Activated CD8-positive, alpha-beta T cell treated with anti-CD3 and anti-CD28 coated beads for 36 hours (primary cell): ENCODE measurements at regions of chr10 and their contacts with region 1.

Region 1: DNA sequence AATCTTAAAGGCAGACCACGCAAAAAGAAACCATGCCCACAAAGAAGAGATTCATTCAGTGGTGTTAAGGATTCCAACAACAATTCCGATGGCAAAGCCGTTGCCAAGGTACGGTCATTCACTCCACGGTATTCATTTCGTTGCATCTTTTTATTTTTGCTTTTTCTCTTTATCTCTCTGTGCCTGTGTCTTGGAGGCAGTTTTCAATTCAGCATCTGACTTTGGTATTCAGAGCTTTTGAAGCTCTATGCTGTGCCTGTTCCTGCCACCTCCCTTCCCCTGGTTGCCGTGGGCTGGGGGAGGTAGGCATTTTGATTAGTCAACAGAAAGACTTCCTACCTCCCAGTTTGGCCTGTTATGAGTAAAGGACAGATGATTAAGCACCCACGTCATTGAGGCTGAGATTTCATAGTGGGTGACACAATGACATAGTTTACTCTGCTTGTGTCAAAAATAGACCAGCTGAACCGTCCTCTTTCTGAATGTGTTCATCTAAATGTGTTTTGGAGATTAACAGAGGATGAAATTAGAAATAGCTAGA is 149.5 kb downstream of the ARID5B start:
- DNase-seq: peak; percentile 88
- ATAC-seq: peak; percentile 57
- H3K4me3 Mint-ChIP-seq: peak overlapping the region; percentile 84
- H3K27ac Mint-ChIP-seq: peak overlapping the region; percentile 95
- H3K4me1 Mint-ChIP-seq: peaks cover 96% of the 10 kb centered on the region
- H3K27me3 Mint-ChIP-seq: no peaks in the 10 kb centered on the region
- CTCF ChIP-seq: no peak

Region 2: DNA sequence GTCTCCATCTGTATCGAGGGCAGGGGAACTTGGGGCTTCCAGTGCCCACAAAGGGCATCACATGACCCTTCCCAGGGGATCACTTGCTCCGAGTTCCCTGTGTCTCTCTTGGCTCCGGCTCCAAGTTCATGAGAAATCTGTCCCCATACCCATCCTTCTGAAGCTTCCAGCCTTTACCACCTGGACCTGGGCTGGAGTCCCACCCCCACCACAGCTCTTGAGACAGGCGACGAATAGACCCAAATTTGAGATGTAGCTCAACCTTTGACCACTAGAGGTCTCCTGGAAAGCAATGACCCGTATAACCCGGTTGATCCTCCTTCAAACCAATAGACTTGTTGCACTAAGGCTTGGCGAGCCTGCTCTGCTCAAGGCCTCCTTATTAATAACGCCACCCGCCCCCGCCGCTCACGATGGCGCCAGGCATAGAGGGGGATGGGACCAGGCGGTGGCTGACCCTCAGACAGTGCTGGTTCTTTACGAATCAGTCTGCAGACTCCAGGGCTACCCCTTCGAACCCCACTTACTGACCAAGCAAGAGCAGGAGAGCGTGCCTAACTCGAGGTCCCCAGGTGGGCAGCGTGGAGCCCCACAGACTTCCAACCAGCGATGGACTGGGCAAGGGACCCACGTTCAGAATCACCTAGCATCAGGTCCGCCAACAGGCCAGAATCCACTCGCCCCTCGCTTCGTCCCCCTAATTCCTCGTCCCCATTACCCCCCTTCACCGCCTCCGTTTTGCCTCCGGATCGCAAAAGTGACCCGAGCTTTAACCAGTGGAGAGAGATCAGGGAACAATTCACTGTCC is 153.9 kb before region 1 on chr10:
- CTCF ChIA-PET with region 1: interaction called, 13 read pairs
- POLR2A ChIA-PET with region 1: interaction called, 79 read pairs
- intact Hi-C with region 1: loop called (anchors 5 kb)
- DNase-seq: peak; percentile 74
- ATAC-seq: peak; percentile 78
- H3K4me3 Mint-ChIP-seq: peak overlapping the region; percentile 55
- H3K27ac Mint-ChIP-seq: peak overlapping the region; percentile 97
- H3K4me1 Mint-ChIP-seq: peaks cover 42% of the 10 kb centered on the region
- H3K27me3 Mint-ChIP-seq: no peaks in the 10 kb centered on the region
- CTCF ChIP-seq: peak; percentile 67

Region 3: GRCh38 chr10:61943674-61944410 is 107.1 kb before region 1 on chr10:
- CTCF ChIA-PET with region 1: interaction called, 6 read pairs
- POLR2A ChIA-PET with region 1: interaction called, 10 read pairs
- intact Hi-C with region 1: loop called (anchors 2 kb)
- DNase-seq: peak; percentile 58
- ATAC-seq: peak; percentile 77
- H3K4me3 Mint-ChIP-seq: peak overlapping the region; percentile 70
- H3K27ac Mint-ChIP-seq: peak overlapping the region; percentile 98
- H3K4me1 Mint-ChIP-seq: peaks cover 64% of the 10 kb centered on the region
- H3K27me3 Mint-ChIP-seq: no peaks in the 10 kb centered on the region
- CTCF ChIP-seq: no peak

Region 4: DNA sequence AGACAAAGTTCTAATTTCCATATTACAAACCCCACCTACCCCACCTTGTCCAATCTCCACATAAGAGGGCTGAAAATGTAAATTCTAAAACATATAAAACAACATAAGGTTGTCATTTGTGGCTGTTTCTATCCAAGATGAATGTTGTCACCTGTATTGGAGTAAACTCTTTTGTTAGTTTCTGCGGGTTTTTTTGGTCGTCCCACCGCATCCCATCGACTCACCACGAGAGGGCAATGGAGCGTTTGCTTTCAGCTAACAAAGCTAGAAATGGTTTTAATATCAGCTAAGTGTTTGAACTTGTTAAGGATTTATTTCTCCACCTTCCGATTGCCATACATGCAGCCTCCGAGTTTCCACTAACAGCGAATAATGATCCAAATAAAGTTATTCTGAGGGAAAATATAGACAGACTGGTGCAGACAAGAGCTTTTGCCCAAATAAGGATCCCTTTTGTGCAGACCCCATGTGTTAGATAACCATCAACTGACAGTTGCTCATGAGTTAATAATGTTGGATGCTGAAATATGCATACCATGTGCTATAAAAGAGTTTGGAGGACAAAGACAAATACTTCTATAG is 12.3 kb before region 1 on chr10:
- CTCF ChIA-PET with region 1: interaction called, 24 read pairs
- POLR2A ChIA-PET with region 1: interaction called, 21 read pairs
- intact Hi-C with region 1: no loop called
- DNase-seq: peak; percentile 87
- ATAC-seq: peak; percentile 75
- H3K4me3 Mint-ChIP-seq: peak overlapping the region; percentile 1
- H3K27ac Mint-ChIP-seq: peak overlapping the region; percentile 82
- H3K4me1 Mint-ChIP-seq: peaks cover 62% of the 10 kb centered on the region
- H3K27me3 Mint-ChIP-seq: no peaks in the 10 kb centered on the region
- CTCF ChIP-seq: peak; percentile 81

Region 5: DNA sequence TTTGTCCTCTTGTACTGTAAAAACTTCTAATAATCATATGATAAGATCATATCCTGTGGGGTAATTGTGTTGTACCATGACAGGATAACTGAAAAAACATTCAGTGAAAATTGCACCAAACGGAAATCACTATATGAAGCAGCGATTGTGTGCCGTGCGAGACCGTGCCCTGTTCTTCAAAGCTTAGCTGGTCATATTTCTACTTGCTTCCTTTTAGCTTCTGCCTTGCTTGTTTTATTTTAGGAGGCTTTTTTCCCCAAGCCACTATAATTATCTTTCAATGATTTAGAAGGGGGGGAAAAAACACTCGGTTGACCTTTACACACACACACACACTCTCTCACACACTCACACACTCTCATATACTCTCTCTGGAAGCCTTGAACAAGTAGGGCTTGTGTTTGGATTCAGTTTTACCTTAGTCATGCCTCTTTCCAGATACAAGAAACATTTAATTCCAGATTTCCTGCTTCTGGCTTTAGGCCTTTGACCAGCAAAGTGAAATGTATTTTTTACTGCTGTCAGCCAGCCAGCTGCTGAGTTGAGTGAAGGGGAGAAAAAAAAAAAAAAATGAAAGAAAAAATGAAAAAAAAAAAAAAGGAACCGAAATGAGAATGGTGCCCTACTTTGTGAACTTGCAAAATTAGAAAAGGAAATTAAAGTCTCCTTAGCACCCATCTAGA is 31.9 kb after region 1 on chr10:
- CTCF ChIA-PET with region 1: interaction called, 7 read pairs
- POLR2A ChIA-PET with region 1: interaction called, 23 read pairs
- intact Hi-C with region 1: loop called (anchors 2 kb)
- DNase-seq: peak; percentile 75
- ATAC-seq: peak; percentile 81
- H3K4me3 Mint-ChIP-seq: peak overlapping the region; percentile 58
- H3K27ac Mint-ChIP-seq: peak overlapping the region; percentile 92
- H3K4me1 Mint-ChIP-seq: peaks cover 64% of the 10 kb centered on the region
- H3K27me3 Mint-ChIP-seq: no peaks in the 10 kb centered on the region
- CTCF ChIP-seq: no peak

Region 6: DNA sequence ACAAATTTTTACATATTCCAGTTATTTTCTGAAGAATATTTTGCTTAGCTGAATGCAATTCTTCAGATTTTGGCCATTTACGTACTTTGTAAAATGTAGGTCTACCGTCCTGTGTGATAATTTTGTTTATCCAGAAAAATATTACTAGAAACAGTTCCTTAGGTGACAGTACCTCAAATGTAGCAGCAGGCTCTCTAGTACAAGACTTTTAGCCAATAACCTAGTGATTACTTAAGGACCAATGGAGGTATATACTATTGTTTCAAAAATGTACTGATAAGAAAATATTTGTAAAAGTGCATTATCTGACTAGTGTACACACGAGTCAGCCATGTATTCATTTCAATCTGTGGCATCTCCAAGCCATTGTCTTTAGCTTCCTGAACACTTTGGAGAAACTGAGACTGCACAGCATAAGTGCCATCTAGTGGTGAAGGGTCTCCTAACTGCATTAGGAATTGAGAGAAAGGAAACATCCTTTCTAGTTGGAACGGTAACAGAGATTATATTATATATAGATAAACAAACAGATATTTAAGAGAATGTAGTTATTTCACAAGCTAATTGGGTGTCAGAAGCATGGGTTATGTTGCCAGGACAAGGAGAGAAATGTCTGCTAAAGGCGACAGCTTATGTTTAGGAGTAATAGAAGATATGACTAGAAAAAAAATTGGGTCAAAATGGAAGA is 194.0 kb after region 1 on chr10:
- CTCF ChIA-PET with region 1: interaction called, 20 read pairs
- POLR2A ChIA-PET with region 1: interaction called, 4 read pairs
- intact Hi-C with region 1: no loop called
- DNase-seq: peak; percentile 65
- ATAC-seq: peak; percentile 82
- H3K4me3 Mint-ChIP-seq: no peak overlapping the region
- H3K27ac Mint-ChIP-seq: peak overlapping the region; percentile 74
- H3K4me1 Mint-ChIP-seq: peaks cover 33% of the 10 kb centered on the region
- H3K27me3 Mint-ChIP-seq: no peaks in the 10 kb centered on the region
- CTCF ChIP-seq: peak; percentile 87